ENCODE measurements at regions of chr15 and their contacts with region 1.

Region 1: DNA sequence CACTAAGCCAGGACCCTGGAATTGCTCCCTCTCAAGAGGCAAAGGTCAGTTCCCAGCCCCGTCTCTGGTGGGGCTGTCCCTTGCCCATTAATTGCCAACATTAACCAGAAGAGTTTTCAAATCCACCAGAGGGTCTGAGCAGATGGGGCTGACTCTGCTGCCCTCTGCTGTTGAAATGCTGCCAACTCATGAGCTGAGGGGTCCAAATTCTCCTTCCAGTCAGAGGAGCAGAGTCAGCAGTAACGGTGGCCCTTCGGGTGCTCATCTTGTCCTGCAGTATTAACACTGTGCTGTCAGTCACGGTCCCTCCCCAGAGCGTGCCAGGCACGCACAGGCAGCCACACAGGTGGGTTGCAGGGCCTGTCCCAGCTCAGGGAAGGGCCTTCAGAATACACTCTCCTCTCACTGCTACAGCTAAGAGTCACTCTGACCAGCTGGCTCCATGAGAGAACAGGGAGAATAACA is 10.7 kb upstream of the SPTBN5 start:
- DNase-seq: peak; percentile 64
- ATAC-seq: peak; percentile 94
- H3K4me3 ChIP-seq: no peak overlapping the region
- H3K27ac ChIP-seq: no peak overlapping the region
- H3K4me1 ChIP-seq: no peaks in the 10 kb centered on the region
- H3K27me3 ChIP-seq: no peaks in the 10 kb centered on the region
- CTCF ChIP-seq: peak; percentile 94
- EP300 ChIP-seq: no peak
- POLR2A ChIP-seq: no peak
- RAD21 ChIP-seq: peak; percentile 85

Region 2: GRCh38 chr15:41878355-41878699 is 26.2 kb before region 1 on chr15:
- CTCF ChIA-PET with region 1: no interaction called
- POLR2A ChIA-PET with region 1: no interaction called
- in situ Hi-C with region 1: no loop called
- intact Hi-C with region 1: loop called (anchors 1 kb)
- DNase-seq: no peak
- ATAC-seq: no peak
- H3K4me3 ChIP-seq: no peak overlapping the region
- H3K27ac ChIP-seq: no peak overlapping the region
- H3K4me1 ChIP-seq: peaks cover 17% of the 10 kb centered on the region; the same call in 1 of the 2 replicates
- H3K27me3 ChIP-seq: peaks cover 16 to 77% of the 10 kb centered on the region in 2 experiments; a peak in 4 of 5 replicates
- CTCF ChIP-seq: no peak
- EP300 ChIP-seq: no peak
- POLR2A ChIP-seq: no peak
- RAD21 ChIP-seq: no peak

Region 3: DNA sequence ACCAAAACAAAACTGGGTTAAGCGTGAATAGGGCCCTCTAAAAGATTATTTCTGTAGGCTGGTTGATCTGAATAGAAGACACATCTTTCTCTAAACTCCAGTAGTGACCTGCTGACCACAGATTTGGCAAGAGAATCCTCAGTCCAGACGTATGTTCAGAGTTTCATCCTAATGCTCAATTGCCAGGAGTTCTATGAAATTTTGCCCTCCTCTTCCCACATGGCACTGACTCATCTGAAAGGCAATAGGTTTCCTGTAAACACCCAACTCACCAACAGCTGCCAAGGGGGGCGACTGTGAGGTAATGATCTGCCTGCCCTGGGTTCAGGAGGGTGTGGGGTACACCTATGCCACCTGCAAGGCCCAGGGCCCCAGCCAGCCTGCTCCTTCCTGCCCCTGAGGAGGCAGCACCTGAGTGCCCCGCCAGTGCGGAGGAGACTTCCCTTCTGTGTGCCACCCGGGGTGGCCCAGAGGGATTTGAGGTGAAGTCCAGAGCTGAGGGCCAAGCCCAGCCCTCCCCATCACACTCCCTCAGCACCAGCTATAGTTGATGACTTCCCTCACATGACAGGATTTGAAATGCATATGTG is 198.2 kb after region 1 on chr15:
- CTCF ChIA-PET with region 1: no interaction called
- POLR2A ChIA-PET with region 1: no interaction called
- in situ Hi-C with region 1: no loop called
- intact Hi-C with region 1: no loop called
- DNase-seq: no peak
- ATAC-seq: no peak
- H3K4me3 ChIP-seq: no peak overlapping the region
- H3K27ac ChIP-seq: no peak overlapping the region
- H3K4me1 ChIP-seq: peaks cover 39% of the 10 kb centered on the region
- H3K27me3 ChIP-seq: peaks cover 1 to 8% of the 10 kb centered on the region in 2 experiments; a peak in 4 of 5 replicates
- CTCF ChIP-seq: no peak
- EP300 ChIP-seq: no peak
- POLR2A ChIP-seq: no peak
- RAD21 ChIP-seq: no peak

Measured in HepG2 (cell line).